WTC11 (cell line): ENCODE measurements at regions of chr6 and their contacts with region 1.

Region 1: GRCh38 chr6:161370880-161371279 is 97.0 kb upstream of the AGPAT4 start:
- DNase-seq: peak; percentile 78
- ATAC-seq: peak; percentile 73
- H3K4me3 Mint-ChIP-seq: no peak overlapping the region
- H3K27ac Mint-ChIP-seq: 0 out of 2 replicates have a peak overlapping the region, but pooled peaks have one; percentile 29
- H3K4me1 Mint-ChIP-seq: peaks cover 4% of the 10 kb centered on the region
- H3K27me3 Mint-ChIP-seq: no peaks in the 10 kb centered on the region
- CTCF ChIP-seq: peak; percentile 92

Region 2: GRCh38 chr6:160766989-160767660 is 603.8 kb before region 1 on chr6:
- CTCF ChIA-PET with region 1: interaction called, 10 read pairs
- POLR2A ChIA-PET with region 1: no interaction called
- DNase-seq: peak; percentile 81
- ATAC-seq: peak; percentile 87
- H3K4me3 Mint-ChIP-seq: peak overlapping the region; percentile 84
- H3K27ac Mint-ChIP-seq: no peak overlapping the region
- H3K4me1 Mint-ChIP-seq: peaks cover 8% of the 10 kb centered on the region
- H3K27me3 Mint-ChIP-seq: peaks cover 21% of the 10 kb centered on the region
- CTCF ChIP-seq: peak; percentile 65

Region 3: GRCh38 chr6:161101517-161101916 is 269.4 kb before region 1 on chr6:
- CTCF ChIA-PET with region 1: interaction called, 23 read pairs
- POLR2A ChIA-PET with region 1: no interaction called
- DNase-seq: peak; percentile 25
- ATAC-seq: peak; percentile 71
- H3K4me3 Mint-ChIP-seq: no peak overlapping the region
- H3K27ac Mint-ChIP-seq: no peak overlapping the region
- H3K4me1 Mint-ChIP-seq: no peaks in the 10 kb centered on the region
- H3K27me3 Mint-ChIP-seq: no peaks in the 10 kb centered on the region
- CTCF ChIP-seq: no peak

Region 4: GRCh38 chr6:161152907-161153662 is 217.8 kb before region 1 on chr6:
- CTCF ChIA-PET with region 1: interaction called, 19 read pairs
- POLR2A ChIA-PET with region 1: no interaction called
- DNase-seq: no peak
- ATAC-seq: peak; percentile 50; the same call in 1 of the 2 replicates
- H3K4me3 Mint-ChIP-seq: no peak overlapping the region
- H3K27ac Mint-ChIP-seq: no peak overlapping the region
- H3K4me1 Mint-ChIP-seq: no peaks in the 10 kb centered on the region
- H3K27me3 Mint-ChIP-seq: no peaks in the 10 kb centered on the region
- CTCF ChIP-seq: no peak

Region 5: DNA sequence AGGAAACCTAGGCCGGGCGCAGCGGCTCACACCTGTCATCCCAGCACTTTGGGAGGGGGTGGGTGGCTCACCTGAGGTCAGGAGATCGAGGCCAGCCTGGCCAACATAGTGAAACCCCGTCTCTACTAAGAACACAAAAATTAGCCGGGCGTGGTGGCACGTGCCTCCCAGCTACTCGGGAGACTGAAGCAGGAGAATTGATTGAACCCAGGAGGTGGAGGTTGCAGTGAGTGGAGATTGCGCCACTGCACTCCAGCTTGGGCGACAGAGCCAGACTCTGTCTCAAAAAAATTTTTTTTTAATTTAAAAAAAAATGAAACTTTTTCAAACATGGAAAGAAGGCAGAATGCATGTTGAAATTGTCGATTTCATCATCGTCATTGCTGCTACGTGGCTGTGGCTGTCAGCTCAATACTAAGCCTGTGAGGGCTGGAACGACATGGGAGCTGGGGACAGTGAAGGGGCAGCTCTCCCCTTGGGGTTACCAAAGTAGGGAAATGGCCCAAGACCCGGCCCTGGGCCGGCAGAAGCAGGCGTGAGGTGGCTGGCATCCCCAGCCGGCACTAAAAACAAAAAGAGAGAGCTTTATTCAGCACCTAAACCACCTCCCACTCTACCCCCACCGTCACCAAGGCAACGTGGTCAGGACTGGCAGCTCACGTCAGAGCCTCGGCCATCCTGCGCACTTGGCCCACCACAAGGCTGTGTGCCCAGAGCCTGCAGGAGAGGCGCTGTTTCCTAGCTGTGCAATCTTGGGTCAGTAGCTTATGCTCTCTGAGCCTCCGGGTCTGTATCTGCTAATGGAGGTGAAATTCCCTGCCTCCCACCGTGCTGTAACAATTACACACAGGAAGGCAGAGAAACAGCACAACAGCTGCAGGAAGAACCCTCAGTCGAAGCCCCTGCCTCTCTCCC is 127.8 kb before region 1 on chr6:
- CTCF ChIA-PET with region 1: interaction called, 23 read pairs
- POLR2A ChIA-PET with region 1: no interaction called
- DNase-seq: peak; percentile 64
- ATAC-seq: peak; percentile 93
- H3K4me3 Mint-ChIP-seq: no peak overlapping the region
- H3K27ac Mint-ChIP-seq: 0 out of 2 replicates have a peak overlapping the region, but pooled peaks have one; percentile 75
- H3K4me1 Mint-ChIP-seq: peaks cover 47% of the 10 kb centered on the region
- H3K27me3 Mint-ChIP-seq: no peaks in the 10 kb centered on the region
- CTCF ChIP-seq: no peak

Region 6: DNA sequence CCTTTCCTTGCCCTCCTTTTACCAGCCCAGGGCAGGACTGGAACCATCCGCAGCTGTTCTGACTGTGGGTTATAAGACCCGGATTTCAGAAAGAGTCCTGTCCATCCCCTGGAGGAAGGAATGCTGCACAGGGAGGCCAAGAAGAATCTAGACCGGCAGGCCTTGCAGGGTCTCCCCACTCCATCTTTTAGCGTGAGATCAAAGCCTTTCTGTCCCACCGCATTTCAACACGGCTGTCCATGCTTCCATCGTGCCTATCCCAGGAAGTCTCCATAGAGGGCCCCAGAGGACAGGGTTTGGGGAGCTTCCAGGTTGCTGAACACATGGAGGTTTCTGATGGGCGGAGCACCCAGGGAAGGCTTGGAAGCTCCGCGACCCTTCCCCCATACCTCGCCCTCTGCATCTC is 17.7 kb before region 1 on chr6:
- CTCF ChIA-PET with region 1: interaction called, 69 read pairs
- POLR2A ChIA-PET with region 1: interaction called, 5 read pairs
- DNase-seq: peak; percentile 81
- ATAC-seq: peak; percentile 96
- H3K4me3 Mint-ChIP-seq: no peak overlapping the region
- H3K27ac Mint-ChIP-seq: no peak overlapping the region
- H3K4me1 Mint-ChIP-seq: peaks cover 27% of the 10 kb centered on the region
- H3K27me3 Mint-ChIP-seq: peaks cover 4% of the 10 kb centered on the region; the same call in 1 of the 2 replicates
- CTCF ChIP-seq: peak; percentile 55; the same call in 1 of the 2 replicates